ENCODE measurements at regions of chr19 and their contacts with region 1.

Region 1: GRCh38 chr19:17450264-17451075 is 2.0 kb upstream of the TMEM221 start:
- DNase-seq: no peak
- H3K4me3 ChIP-seq: no peak overlapping the region
- H3K27ac ChIP-seq: no peak overlapping the region
- H3K4me1 ChIP-seq: peaks cover 0 to 24% (median 10%) of the 10 kb centered on the region in 4 donors
- H3K27me3 ChIP-seq: peaks cover 0 to 64% of the 10 kb centered on the region in 2 donors
- CTCF ChIP-seq: no peak

Region 2: GRCh38 chr19:17579661-17580244 is 129.3 kb after region 1 on chr19:
- intact Hi-C with region 1: loop called (anchors 10 kb)
- DNase-seq: peak in 1 of 2 donors; percentile 51
- H3K4me3 ChIP-seq: no peak overlapping the region
- H3K27ac ChIP-seq: no peak overlapping the region
- H3K4me1 ChIP-seq: no peaks in the 10 kb centered on the region
- H3K27me3 ChIP-seq: no peaks in the 10 kb centered on the region
- CTCF ChIP-seq: no peak

Region 3: GRCh38 chr19:17784201-17785008 is 333.9 kb after region 1 on chr19:
- intact Hi-C with region 1: no loop called
- DNase-seq: peak; percentile 53 to 71
- H3K4me3 ChIP-seq: no peak overlapping the region
- H3K27ac ChIP-seq: no peak overlapping the region
- H3K4me1 ChIP-seq: peaks cover 0 to 4% (median 2%) of the 10 kb centered on the region in 4 donors
- H3K27me3 ChIP-seq: peaks cover 0 to 58% of the 10 kb centered on the region in 2 donors
- CTCF ChIP-seq: peak; percentile 74 to 75